MCF 10A (cell line): ENCODE measurements at regions of chr4 and their contacts with region 1.

Region 1: DNA sequence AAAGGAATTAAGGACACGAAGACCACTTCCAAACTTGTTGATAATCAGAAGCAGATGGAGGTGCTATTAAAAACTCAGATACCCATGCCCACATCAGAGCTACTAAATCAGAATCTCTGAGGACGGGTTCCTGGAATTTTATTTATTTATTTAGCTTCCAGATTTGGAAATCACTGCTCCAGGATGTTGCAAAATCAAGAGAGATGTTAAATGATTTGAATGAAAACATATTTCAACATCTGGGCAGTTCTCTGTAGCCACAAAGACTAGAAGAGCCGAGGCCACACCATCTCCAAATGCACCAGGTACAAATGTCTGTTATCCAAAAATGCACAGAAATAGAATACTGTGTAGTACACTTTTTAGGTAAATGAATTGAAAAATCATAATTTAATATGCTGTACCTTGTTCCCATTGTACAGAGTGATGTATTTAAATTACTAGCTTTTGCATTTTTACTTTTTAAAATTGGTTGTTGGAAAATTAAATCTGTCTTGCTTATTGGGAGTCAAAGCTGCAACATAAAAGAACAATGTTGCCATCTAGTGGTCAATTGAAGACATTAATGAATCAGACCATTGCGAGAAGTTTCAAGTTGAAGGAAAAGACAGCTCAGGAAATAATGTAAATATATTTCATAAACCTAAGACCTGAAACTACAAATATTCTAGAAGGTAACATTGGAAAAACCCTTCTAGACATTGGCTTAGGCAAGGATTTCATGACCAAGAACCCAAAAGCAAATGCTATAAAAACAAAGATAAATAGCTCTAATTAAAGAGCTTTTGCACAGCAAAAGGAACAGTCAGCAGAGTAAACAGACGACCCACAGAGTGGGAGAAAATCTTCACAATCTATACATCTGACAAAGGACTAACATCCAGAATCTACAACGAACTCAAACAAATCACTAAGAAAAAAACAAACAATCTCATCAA is 151.3 kb upstream of the TTC29 start:
- DNase-seq: peak; percentile 84
- H3K4me3 Mint-ChIP-seq: peak overlapping the region; percentile 12
- H3K27ac Mint-ChIP-seq: peak overlapping the region; percentile 80
- H3K4me1 Mint-ChIP-seq: peaks cover 24% of the 10 kb centered on the region
- H3K27me3 Mint-ChIP-seq: no peaks in the 10 kb centered on the region
- CTCF ChIP-seq: peak; percentile 50

Region 2: GRCh38 chr4:146342600-146343192 is 754.2 kb before region 1 on chr4:
- CTCF ChIA-PET with region 1: interaction called, 12 read pairs
- POLR2A ChIA-PET with region 1: interaction called, 3 read pairs
- intact Hi-C with region 1: loop called (anchors 2 kb)
- DNase-seq: peak; percentile 50
- H3K4me3 Mint-ChIP-seq: no peak overlapping the region
- H3K27ac Mint-ChIP-seq: no peak overlapping the region
- H3K4me1 Mint-ChIP-seq: no peaks in the 10 kb centered on the region
- H3K27me3 Mint-ChIP-seq: no peaks in the 10 kb centered on the region
- CTCF ChIP-seq: peak; percentile 61

Region 3: DNA sequence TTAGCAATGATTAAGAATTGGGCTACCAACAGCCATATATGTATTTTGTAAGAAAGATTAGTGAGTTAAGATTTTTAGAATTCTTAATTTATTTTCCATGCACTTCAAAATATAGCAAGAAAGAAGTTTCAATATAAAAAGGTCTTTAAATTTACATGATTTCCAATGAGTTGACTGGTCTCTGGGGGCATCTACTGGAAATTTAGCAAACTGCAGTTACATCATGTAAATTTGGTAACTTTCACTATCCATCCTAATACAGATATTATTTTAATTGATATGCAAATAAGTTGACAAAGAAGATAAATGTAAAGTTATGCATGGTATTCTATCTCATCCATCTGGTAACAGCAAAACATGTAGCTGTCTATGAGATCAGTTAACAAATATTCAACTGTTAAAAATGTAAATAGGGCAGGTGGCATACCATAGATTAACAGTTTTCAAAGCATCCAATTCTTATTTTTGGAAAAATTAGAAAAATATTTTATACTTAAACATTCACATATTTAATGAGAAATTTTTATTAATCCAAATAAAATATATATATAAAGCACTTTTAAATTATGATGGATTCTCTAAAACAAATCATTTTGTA is 180.4 kb before region 1 on chr4:
- CTCF ChIA-PET with region 1: interaction called, 3 read pairs
- POLR2A ChIA-PET with region 1: no interaction called
- intact Hi-C with region 1: loop called (anchors 2 kb)
- DNase-seq: peak; percentile 59
- H3K4me3 Mint-ChIP-seq: no peak overlapping the region
- H3K27ac Mint-ChIP-seq: no peak overlapping the region
- H3K4me1 Mint-ChIP-seq: peaks cover 6% of the 10 kb centered on the region
- H3K27me3 Mint-ChIP-seq: peaks cover 58% of the 10 kb centered on the region
- CTCF ChIP-seq: peak; percentile 89

Region 4: GRCh38 chr4:147029296-147029695 is 67.6 kb before region 1 on chr4:
- CTCF ChIA-PET with region 1: interaction called, 285 read pairs
- POLR2A ChIA-PET with region 1: interaction called, 3 read pairs
- intact Hi-C with region 1: no loop called
- DNase-seq: no peak
- H3K4me3 Mint-ChIP-seq: no peak overlapping the region
- H3K27ac Mint-ChIP-seq: no peak overlapping the region
- H3K4me1 Mint-ChIP-seq: peaks cover 5% of the 10 kb centered on the region
- H3K27me3 Mint-ChIP-seq: no peaks in the 10 kb centered on the region
- CTCF ChIP-seq: no peak

Region 5: DNA sequence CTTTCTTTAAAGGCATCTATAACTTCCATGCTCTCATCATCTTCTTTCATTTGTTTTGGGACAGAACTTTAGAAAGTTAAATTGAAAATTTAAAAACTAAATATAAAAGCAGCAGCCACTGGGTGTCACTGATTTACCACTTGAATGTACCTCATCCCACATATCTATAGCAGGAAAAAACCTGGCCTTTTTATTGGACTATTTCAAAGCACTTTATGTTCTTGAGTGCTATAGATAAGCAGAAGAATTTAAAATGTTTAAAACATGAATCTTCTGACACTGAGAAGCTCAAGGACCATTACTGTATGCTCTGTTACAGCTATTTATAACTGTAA is 14.1 kb after region 1 on chr4:
- CTCF ChIA-PET with region 1: interaction called, 20 read pairs
- POLR2A ChIA-PET with region 1: interaction called, 4 read pairs
- intact Hi-C with region 1: no loop called
- DNase-seq: no peak
- H3K4me3 Mint-ChIP-seq: no peak overlapping the region
- H3K27ac Mint-ChIP-seq: no peak overlapping the region
- H3K4me1 Mint-ChIP-seq: no peaks in the 10 kb centered on the region
- H3K27me3 Mint-ChIP-seq: no peaks in the 10 kb centered on the region
- CTCF ChIP-seq: peak; percentile 8